HAP-1 (cell line): ENCODE measurements at regions of chr1 and their contacts with region 1.

Region 1: GRCh38 chr1:52697795-52698674 is at the start of gene COA7:
- DNase-seq: peak; percentile 70 to 90
- H3K4me3 ChIP-seq: peak within 1 kb of the TSS; percentile 70
- H3K4me1 ChIP-seq: peaks cover 12% of the 10 kb centered on the region
- H3K27me3 ChIP-seq: no peaks in the 10 kb centered on the region

Region 2: GRCh38 chr1:51878616-51879336 is 819.3 kb before region 1 on chr1 and contains the start of gene NRDC:
- in situ Hi-C with region 1: loop called (anchors 25 kb)
- DNase-seq: peak; percentile 99 to 100
- H3K4me3 ChIP-seq: peak within 1 kb of the TSS; percentile 90
- H3K4me1 ChIP-seq: peaks cover 22% of the 10 kb centered on the region
- H3K27me3 ChIP-seq: 0 out of 2 replicates have a peak, but pooled peaks cover 7% of the 10 kb centered on the region

Region 3: DNA sequence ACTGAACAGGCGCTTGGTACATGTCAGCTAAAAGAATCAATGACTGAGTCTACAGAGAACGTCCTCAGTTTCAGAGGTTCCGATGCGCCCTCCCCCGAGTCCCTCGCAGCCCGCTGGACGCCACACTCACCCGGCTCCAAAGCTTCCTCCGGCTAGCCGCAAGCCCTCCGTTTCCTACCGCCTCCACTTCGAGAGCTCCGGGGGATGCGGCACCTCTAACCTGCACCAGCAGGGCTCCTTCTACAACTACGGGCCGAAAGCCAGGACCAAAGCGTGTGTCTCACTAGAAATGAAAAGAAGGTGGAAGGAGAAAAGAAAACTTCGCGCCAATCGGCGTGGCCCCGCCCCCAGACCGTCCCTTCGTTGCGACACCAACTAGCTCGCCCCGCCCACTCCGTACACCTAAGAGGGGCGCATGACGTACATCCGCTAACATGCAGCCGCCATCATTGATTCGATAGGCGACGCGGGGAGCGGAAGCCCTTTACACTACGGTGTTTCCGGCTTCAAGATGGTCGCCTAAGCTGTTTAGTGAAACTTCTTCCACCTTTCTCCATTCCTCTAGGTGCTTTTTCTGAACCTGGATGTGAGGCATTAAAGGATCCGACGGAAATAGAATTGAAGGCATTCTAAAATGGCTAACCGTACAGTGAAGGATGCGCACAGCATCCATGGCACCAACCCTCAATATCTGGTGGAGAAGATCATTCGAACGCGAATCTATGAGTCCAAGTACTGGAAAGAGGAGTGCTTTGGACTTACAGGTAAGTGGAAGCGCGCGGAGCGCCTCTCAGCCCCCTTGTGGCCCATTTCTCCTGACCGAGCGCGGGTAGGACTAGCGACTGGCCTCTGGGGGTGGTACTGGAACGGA is 293.7 kb before region 1 on chr1 and contains the starts of genes ORC1 and PRPF38A:
- in situ Hi-C with region 1: loop called (anchors 25 kb)
- DNase-seq: peak; percentile 99
- H3K4me3 ChIP-seq: peak within 1 kb of the TSS; percentile 70
- H3K4me1 ChIP-seq: peaks cover 9% of the 10 kb centered on the region
- H3K27me3 ChIP-seq: no peaks in the 10 kb centered on the region